CD4-positive, alpha-beta T cell (primary cell): ENCODE measurements at regions of chr1 and their contacts with region 1.

Region 1: DNA sequence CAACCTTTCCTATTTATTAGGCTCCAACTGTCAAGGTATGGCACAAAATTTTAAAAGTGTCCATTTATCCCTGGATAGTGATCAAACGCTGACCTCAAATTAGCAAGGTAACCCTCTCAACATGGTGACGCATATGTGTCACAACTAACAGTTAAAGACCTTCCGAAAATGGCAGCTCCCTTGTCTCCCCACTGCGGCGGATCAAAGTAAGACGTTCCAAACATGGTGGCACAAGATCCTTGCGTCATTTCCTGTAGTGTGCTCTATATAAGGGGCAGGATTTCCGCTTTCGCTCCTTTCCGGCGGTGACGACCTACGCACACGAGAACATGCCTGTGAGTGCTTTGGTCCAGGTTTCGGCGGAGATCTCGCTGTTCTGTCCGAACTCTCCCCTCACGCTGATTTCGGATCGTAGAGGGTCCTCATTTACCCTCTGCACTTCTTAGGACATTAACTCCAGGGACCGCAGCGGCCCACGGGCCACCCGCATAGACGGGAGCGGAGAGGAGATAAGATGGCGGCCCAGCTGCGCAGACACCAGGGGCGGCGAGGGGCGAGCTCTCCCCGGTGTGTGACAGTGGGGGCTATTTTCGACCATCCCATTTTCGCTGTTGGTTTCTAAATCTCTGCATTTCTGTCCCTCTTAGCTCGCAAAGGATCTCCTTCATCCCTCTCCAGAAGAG is at the start of gene RPS27:
- DNase-seq: peak; percentile 77 to 98 (median 84)
- ATAC-seq: peak; percentile 85
- H3K4me3 ChIP-seq: peak within 1 kb of the TSS; percentile 71
- H3K4me3 Mint-ChIP-seq: peak within 1 kb of the TSS; percentile 97
- H3K27ac ChIP-seq: peak within 1 kb of the TSS; percentile 97
- H3K27ac Mint-ChIP-seq: peak within 1 kb of the TSS; percentile 96
- H3K4me1 ChIP-seq: peaks cover 40% of the 10 kb centered on the region
- H3K4me1 Mint-ChIP-seq: peaks cover 49% of the 10 kb centered on the region
- H3K27me3 ChIP-seq: peaks cover 0 to 3% of the 10 kb centered on the region in 2 experiments
- H3K27me3 Mint-ChIP-seq: peaks cover 9% of the 10 kb centered on the region
- CTCF ChIP-seq: no peak
- total RNA-seq, gene RPS27: 7,636 to 8,442 TPM

Region 2: GRCh38 chr1:153633716-153634665 is 356.6 kb before region 1 on chr1 and contains the start of gene CHTOP:
- CTCF ChIA-PET with region 1: no interaction called
- POLR2A ChIA-PET with region 1: interaction called, 32 read pairs
- intact Hi-C with region 1: no loop called
- DNase-seq: peak; percentile 90 to 98 (median 95)
- ATAC-seq: peak; percentile 87
- H3K4me3 ChIP-seq: peak within 1 kb of the TSS; percentile 83
- H3K4me3 Mint-ChIP-seq: peak within 1 kb of the TSS; percentile 100
- H3K27ac ChIP-seq: peak within 1 kb of the TSS; percentile 98 to 100
- H3K27ac Mint-ChIP-seq: peak within 1 kb of the TSS; percentile 100
- H3K4me1 ChIP-seq: peaks cover 33% of the 10 kb centered on the region
- H3K4me1 Mint-ChIP-seq: peaks cover 47% of the 10 kb centered on the region
- H3K27me3 ChIP-seq: no peaks in the 10 kb centered on the region
- H3K27me3 Mint-ChIP-seq: no peaks in the 10 kb centered on the region
- CTCF ChIP-seq: no peak
- total RNA-seq, gene CHTOP: 97.1 to 102 TPM

Region 3: DNA sequence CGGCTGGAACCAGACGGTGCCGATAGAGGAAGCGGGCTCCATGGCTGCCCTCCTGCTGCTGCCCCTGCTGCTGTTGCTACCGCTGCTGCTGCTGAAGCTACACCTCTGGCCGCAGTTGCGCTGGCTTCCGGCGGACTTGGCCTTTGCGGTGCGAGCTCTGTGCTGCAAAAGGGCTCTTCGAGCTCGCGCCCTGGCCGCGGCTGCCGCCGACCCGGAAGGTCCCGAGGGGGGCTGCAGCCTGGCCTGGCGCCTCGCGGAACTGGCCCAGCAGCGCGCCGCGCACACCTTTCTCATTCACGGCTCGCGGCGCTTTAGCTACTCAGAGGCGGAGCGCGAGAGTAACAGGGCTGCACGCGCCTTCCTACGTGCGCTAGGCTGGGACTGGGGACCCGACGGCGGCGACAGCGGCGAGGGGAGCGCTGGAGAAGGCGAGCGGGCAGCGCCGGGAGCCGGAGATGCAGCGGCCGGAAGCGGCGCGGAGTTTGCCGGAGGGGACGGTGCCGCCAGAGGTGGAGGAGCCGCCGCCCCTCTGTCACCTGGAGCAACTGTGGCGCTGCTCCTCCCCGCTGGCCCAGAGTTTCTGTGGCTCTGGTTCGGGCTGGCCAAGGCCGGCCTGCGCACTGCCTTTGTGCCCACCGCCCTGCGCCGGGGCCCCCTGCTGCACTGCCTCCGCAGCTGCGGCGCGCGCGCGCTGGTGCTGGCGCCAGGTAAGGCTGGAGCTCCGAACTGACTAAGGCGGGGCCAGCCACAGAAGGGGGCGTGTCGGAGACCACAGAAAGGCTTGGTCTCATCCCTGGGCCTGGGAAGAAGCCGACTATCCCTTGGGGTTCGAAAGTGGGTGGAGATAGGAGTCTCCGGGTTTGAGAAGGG is 214.9 kb before region 1 on chr1:
- CTCF ChIA-PET with region 1: no interaction called
- POLR2A ChIA-PET with region 1: interaction called, 17 read pairs
- intact Hi-C with region 1: no loop called
- DNase-seq: peak; percentile 42 to 81 (median 64)
- ATAC-seq: peak; percentile 80
- H3K4me3 ChIP-seq: peak overlapping the region; percentile 72
- H3K4me3 Mint-ChIP-seq: peak overlapping the region; percentile 86
- H3K27ac ChIP-seq: peak overlapping the region in 1 of 2 donors; percentile 41
- H3K27ac Mint-ChIP-seq: peak overlapping the region; percentile 51
- H3K4me1 ChIP-seq: peaks cover 25% of the 10 kb centered on the region
- H3K4me1 Mint-ChIP-seq: peaks cover 16% of the 10 kb centered on the region
- H3K27me3 ChIP-seq: no peaks in the 10 kb centered on the region
- H3K27me3 Mint-ChIP-seq: no peaks in the 10 kb centered on the region
- CTCF ChIP-seq: no peak

Region 4: DNA sequence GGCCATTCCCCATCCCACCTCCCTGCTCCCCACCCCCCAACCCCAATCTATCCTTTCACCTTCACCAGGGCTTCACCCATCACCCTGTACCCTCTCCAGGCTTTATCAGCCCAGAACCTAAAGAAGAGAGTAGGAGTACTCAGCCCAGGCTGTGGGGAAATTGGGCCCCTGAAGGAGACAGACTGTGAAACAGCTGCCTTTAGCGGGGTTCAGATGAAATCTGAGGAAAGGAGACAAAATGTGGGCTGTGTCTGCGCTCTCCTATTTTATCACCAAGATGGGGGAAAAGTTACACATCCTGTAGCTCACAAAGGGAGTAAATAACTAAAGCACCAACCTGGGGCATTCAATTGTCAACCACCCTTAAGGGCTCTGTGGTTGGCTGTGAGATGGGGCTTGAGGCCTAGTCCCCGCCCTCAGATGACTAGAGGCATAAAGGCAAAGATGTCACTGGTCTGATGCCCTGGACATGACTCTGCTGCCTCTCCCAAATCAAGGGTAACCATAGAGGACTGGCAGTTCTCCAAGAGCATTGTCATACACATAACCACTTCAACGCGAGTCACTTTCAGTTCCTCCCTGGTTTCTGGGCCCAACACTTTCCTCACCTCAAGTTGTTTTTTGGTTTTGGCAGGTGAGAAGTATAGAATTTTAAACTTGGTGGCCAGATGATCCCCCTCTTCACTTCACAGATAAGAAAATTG is 185.4 kb before region 1 on chr1:
- CTCF ChIA-PET with region 1: interaction called, 4 read pairs
- POLR2A ChIA-PET with region 1: interaction called, 20 read pairs
- intact Hi-C with region 1: no loop called
- DNase-seq: peak in 13 of 14 experiments; percentile 21 to 93 (median 49)
- ATAC-seq: peak; percentile 98
- H3K4me3 ChIP-seq: no peak overlapping the region
- H3K4me3 Mint-ChIP-seq: peak overlapping the region; percentile 22
- H3K27ac ChIP-seq: peak overlapping the region; percentile 61 to 62
- H3K27ac Mint-ChIP-seq: peak overlapping the region; percentile 86
- H3K4me1 ChIP-seq: peaks cover 21% of the 10 kb centered on the region
- H3K4me1 Mint-ChIP-seq: peaks cover 42% of the 10 kb centered on the region
- H3K27me3 ChIP-seq: no peaks in the 10 kb centered on the region
- H3K27me3 Mint-ChIP-seq: no peaks in the 10 kb centered on the region
- CTCF ChIP-seq: no peak

Region 5: GRCh38 chr1:153958111-153958960 is 32.3 kb before region 1 on chr1 and contains the start of gene CRTC2:
- CTCF ChIA-PET with region 1: interaction called, 15 read pairs
- POLR2A ChIA-PET with region 1: interaction called, 58 read pairs
- intact Hi-C with region 1: loop called (anchors 1 kb)
- DNase-seq: peak; percentile 93 to 99 (median 97)
- ATAC-seq: peak; percentile 88
- H3K4me3 ChIP-seq: peak within 1 kb of the TSS; percentile 75
- H3K4me3 Mint-ChIP-seq: peak within 1 kb of the TSS; percentile 94
- H3K27ac ChIP-seq: peak within 1 kb of the TSS; percentile 89 to 91
- H3K27ac Mint-ChIP-seq: peak within 1 kb of the TSS; percentile 89
- H3K4me1 ChIP-seq: peaks cover 65% of the 10 kb centered on the region
- H3K4me1 Mint-ChIP-seq: peaks cover 68% of the 10 kb centered on the region
- H3K27me3 ChIP-seq: no peaks in the 10 kb centered on the region
- H3K27me3 Mint-ChIP-seq: no peaks in the 10 kb centered on the region
- CTCF ChIP-seq: no peak
- total RNA-seq, gene CRTC2: 147 to 152 TPM

Region 6: DNA sequence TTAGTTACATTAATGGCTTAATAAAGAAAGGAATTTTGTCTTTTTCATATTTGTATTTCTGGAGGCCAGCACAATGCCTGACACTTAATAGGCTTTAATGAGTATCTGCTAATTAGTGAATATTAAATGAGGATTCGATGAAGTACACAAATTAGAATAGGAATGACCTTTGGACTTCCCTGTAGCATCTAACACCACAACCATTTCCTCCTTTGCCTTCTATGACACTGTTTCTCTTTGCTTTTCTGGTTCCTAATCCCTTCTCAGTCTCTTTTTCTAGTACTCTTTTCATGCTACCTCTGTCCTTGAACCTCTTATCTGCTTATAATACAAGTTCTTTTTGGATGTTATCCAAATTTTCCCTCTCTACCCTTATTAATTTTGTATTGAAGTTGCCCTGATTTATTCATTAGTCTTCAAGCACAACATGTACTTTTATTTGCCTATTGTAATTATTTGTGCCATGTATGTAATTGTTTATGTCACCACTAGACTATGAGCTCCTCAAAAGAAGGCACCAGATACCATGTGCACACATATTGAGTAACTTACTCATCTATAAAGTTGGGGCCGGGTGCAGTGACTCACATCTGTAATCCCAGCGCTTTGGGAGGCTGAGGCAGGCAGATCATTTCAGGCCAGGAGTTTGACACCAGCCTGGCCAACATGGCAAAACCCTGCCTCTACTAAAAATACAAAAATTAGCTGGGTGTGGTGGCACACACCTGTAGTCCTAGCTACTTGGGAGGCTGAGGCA is 23.7 kb after region 1 on chr1:
- CTCF ChIA-PET with region 1: no interaction called
- POLR2A ChIA-PET with region 1: no interaction called
- intact Hi-C with region 1: no loop called
- DNase-seq: no peak
- ATAC-seq: no peak
- H3K4me3 ChIP-seq: no peak overlapping the region
- H3K4me3 Mint-ChIP-seq: no peak overlapping the region
- H3K27ac ChIP-seq: no peak overlapping the region
- H3K27ac Mint-ChIP-seq: no peak overlapping the region
- H3K4me1 ChIP-seq: no peaks in the 10 kb centered on the region
- H3K4me1 Mint-ChIP-seq: no peaks in the 10 kb centered on the region
- H3K27me3 ChIP-seq: no peaks in the 10 kb centered on the region
- H3K27me3 Mint-ChIP-seq: no peaks in the 10 kb centered on the region
- CTCF ChIP-seq: no peak

Region 7: GRCh38 chr1:154176337-154176736 is 185.7 kb after region 1 on chr1:
- CTCF ChIA-PET with region 1: no interaction called
- POLR2A ChIA-PET with region 1: interaction called, 24 read pairs
- intact Hi-C with region 1: no loop called
- DNase-seq: no peak
- ATAC-seq: no peak
- H3K4me3 ChIP-seq: no peak overlapping the region
- H3K4me3 Mint-ChIP-seq: no peak overlapping the region
- H3K27ac ChIP-seq: peak overlapping the region; percentile 44 to 50
- H3K27ac Mint-ChIP-seq: peak overlapping the region; percentile 74
- H3K4me1 ChIP-seq: peaks cover 60% of the 10 kb centered on the region
- H3K4me1 Mint-ChIP-seq: peaks cover 78% of the 10 kb centered on the region
- H3K27me3 ChIP-seq: no peaks in the 10 kb centered on the region
- H3K27me3 Mint-ChIP-seq: no peaks in the 10 kb centered on the region
- CTCF ChIP-seq: no peak

Region 8: DNA sequence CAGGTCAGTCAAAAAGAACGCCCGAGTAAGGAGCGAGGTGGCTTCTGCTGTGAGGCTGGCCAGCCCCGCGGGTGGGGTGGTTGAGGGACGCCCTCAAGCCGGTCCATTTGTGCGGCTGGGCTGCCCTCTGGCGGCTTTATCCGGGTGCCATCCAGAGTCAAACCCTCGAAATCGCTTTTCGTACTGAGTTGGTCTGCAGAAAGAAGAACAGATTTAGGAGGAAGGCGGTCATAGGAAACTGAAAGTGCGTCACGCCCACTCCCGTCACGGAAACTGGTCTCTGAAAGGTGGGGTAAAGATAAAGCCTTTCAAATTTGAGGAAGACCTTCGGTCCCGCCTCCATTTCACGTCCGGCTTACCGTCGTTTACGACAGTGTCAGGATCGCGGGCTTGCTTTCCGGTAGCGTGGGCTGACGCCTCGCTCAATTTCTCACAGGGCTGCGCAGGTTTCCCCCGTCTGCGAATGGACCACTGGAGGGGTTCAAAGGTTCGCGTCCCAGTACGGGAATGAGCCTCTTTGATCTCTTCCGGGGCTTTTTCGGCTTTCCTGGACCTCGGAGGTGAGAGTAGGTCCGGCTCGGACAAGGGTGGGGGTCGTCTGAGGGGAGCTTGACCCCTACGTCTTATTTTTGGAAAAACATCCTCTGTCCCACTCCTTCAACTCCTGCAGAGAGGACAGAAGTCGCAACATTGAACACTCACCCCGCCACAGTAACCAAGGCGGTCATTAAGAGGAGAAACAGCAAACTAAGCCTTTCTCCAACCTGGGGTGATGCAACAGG is 281.8 kb after region 1 on chr1 and contains the start of gene HAX1:
- CTCF ChIA-PET with region 1: no interaction called
- POLR2A ChIA-PET with region 1: interaction called, 12 read pairs
- intact Hi-C with region 1: loop called (anchors 1 to 5 kb)
- DNase-seq: peak; percentile 90 to 99 (median 94)
- ATAC-seq: peak; percentile 85
- H3K4me3 ChIP-seq: peak within 1 kb of the TSS; percentile 82
- H3K4me3 Mint-ChIP-seq: peak within 1 kb of the TSS; percentile 96
- H3K27ac ChIP-seq: peak within 1 kb of the TSS; percentile 81 to 89
- H3K27ac Mint-ChIP-seq: peak within 1 kb of the TSS; percentile 97
- H3K4me1 ChIP-seq: peaks cover 27% of the 10 kb centered on the region
- H3K4me1 Mint-ChIP-seq: peaks cover 37% of the 10 kb centered on the region
- H3K27me3 ChIP-seq: no peaks in the 10 kb centered on the region
- H3K27me3 Mint-ChIP-seq: no peaks in the 10 kb centered on the region
- CTCF ChIP-seq: peak; percentile 76
- total RNA-seq, gene HAX1: 57.5 to 62.5 TPM

Region 9: GRCh38 chr1:154335025-154335714 is 344.6 kb after region 1 on chr1:
- CTCF ChIA-PET with region 1: no interaction called
- POLR2A ChIA-PET with region 1: no interaction called
- intact Hi-C with region 1: no loop called
- DNase-seq: peak; percentile 82 to 96 (median 90)
- ATAC-seq: peak; percentile 95
- H3K4me3 ChIP-seq: no peak overlapping the region
- H3K4me3 Mint-ChIP-seq: peak overlapping the region; percentile 77
- H3K27ac ChIP-seq: peak overlapping the region; percentile 42 to 64
- H3K27ac Mint-ChIP-seq: peak overlapping the region; percentile 75
- H3K4me1 ChIP-seq: peaks cover 93% of the 10 kb centered on the region
- H3K4me1 Mint-ChIP-seq: peaks cover 79% of the 10 kb centered on the region
- H3K27me3 ChIP-seq: no peaks in the 10 kb centered on the region
- H3K27me3 Mint-ChIP-seq: no peaks in the 10 kb centered on the region
- CTCF ChIP-seq: peak; percentile 96